H1 (cell line): ENCODE measurements at regions of chr4 and their contacts with region 1.

Region 1: GRCh38 chr4:189162073-189162789 is 778.4 kb upstream of the FRG1 start:
- DNase-seq: no peak
- H3K4me3 ChIP-seq: peak overlapping the region in 1 of 4 experiments; percentile 39; a peak in 3 of 8 replicates
- H3K27ac ChIP-seq: peak overlapping the region; percentile 65
- H3K4me1 ChIP-seq: peaks cover 0 to 25% (median 11%) of the 10 kb centered on the region in 4 experiments; a peak in 5 of 7 replicates
- H3K27me3 ChIP-seq: no peaks in the 10 kb centered on the region
- CTCF ChIP-seq: no peak
- EP300 ChIP-seq: no peak
- POLR2A ChIP-seq: peak in 1 of 2 experiments; percentile 58; a peak in 1 of 3 replicates
- RAD21 ChIP-seq: no peak; a peak in 1 of 4 replicates

Region 2: GRCh38 chr4:188986271-188986689 is 176.0 kb before region 1 on chr4:
- CTCF ChIA-PET with region 1: no interaction called
- POLR2A ChIA-PET with region 1: no interaction called
- DNase-seq: no peak
- H3K4me3 ChIP-seq: no peak overlapping the region
- H3K27ac ChIP-seq: no peak overlapping the region
- H3K4me1 ChIP-seq: no peaks in the 10 kb centered on the region
- H3K27me3 ChIP-seq: no peaks in the 10 kb centered on the region
- CTCF ChIP-seq: no peak
- EP300 ChIP-seq: no peak
- POLR2A ChIP-seq: no peak
- RAD21 ChIP-seq: no peak

Region 3: DNA sequence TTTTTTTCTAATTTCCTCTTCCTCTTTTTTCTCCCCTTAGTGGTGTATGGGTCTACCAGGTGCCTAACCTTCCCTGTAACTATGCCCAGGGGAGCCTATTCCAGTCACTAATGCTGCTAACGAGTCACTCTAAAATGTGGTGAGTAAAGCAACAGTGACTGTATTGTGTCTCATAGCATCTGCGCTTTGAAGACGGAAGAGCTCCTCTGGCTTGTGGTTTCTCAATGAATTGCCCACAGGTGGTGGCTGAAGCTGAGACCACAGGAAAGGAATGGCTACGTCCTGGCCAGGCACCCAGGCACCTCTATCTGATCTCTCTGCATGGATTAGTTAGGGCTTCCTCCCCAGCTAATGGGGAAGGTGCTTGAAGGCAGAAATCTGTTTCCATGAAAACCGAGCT is 14.9 kb after region 1 on chr4:
- CTCF ChIA-PET with region 1: interaction called, 14 read pairs
- POLR2A ChIA-PET with region 1: interaction called, 4 read pairs
- DNase-seq: no peak
- H3K4me3 ChIP-seq: no peak overlapping the region
- H3K27ac ChIP-seq: no peak overlapping the region
- H3K4me1 ChIP-seq: peaks cover 2 to 18% (median 9%) of the 10 kb centered on the region in 4 experiments
- H3K27me3 ChIP-seq: no peaks in the 10 kb centered on the region
- CTCF ChIP-seq: no peak
- EP300 ChIP-seq: no peak
- POLR2A ChIP-seq: no peak
- RAD21 ChIP-seq: no peak